ENCODE measurements at regions of chr2 and their contacts with region 1.

Region 1: DNA sequence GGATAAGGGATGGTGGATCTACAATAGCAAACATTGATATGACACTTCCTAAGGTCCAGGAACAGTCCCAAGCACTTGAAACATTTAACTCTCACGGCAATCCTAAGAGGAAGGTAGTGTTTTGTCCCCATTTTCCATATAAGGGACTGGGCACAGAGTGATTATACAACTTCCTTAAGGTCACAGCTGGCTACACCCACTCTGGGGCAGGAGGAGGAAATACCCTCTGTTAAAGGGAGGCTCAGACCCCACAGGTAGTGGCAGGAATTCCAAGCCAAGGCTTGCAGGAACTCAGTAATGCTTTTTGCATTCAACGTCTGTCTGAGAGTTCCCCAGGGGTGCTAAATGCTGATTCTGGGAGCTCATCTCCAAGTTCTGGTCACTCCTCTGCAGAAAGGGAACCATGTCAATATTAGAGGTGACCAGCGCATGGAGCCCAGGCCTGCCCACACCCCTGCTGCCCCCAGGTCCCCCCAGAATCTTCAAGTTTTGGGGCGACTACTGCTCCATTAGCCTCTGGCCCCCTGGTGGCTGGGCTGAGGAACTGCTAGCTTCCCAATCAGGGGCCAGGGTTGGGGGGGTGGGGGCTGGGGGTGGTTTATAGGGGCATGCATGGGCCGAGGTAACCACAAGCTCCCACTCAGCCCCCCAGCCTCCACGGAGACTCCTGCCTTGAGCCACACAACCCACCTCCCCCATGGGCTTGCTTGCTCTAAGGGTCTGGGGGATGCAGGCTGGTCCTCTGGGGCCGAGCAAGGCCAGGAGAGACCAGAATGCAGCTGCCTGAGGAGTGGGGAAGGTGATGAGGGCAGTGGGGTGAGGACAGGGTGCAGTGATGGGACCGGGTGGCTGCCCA is 11.1 kb downstream of the OBSL1 start:
- DNase-seq: no peak
- H3K4me3 ChIP-seq: no peak overlapping the region
- H3K27me3 ChIP-seq: no peaks in the 10 kb centered on the region
- CTCF ChIP-seq: peak; percentile 80

Region 2: GRCh38 chr2:219142329-219142728 is 417.9 kb before region 1 on chr2:
- CTCF ChIA-PET with region 1: no interaction called
- POLR2A ChIA-PET with region 1: no interaction called
- DNase-seq: peak; percentile 76
- H3K4me3 ChIP-seq: no peak overlapping the region
- H3K27me3 ChIP-seq: no peaks in the 10 kb centered on the region
- CTCF ChIP-seq: peak; percentile 59

Region 3: GRCh38 chr2:219530048-219530963 is 30.0 kb before region 1 on chr2:
- CTCF ChIA-PET with region 1: no interaction called
- POLR2A ChIA-PET with region 1: no interaction called
- DNase-seq: no peak
- H3K4me3 ChIP-seq: peak overlapping the region; percentile 11; the same call in 1 of the 2 replicates
- H3K27me3 ChIP-seq: peaks cover 13% of the 10 kb centered on the region
- CTCF ChIP-seq: peak; percentile 96

Region 4: DNA sequence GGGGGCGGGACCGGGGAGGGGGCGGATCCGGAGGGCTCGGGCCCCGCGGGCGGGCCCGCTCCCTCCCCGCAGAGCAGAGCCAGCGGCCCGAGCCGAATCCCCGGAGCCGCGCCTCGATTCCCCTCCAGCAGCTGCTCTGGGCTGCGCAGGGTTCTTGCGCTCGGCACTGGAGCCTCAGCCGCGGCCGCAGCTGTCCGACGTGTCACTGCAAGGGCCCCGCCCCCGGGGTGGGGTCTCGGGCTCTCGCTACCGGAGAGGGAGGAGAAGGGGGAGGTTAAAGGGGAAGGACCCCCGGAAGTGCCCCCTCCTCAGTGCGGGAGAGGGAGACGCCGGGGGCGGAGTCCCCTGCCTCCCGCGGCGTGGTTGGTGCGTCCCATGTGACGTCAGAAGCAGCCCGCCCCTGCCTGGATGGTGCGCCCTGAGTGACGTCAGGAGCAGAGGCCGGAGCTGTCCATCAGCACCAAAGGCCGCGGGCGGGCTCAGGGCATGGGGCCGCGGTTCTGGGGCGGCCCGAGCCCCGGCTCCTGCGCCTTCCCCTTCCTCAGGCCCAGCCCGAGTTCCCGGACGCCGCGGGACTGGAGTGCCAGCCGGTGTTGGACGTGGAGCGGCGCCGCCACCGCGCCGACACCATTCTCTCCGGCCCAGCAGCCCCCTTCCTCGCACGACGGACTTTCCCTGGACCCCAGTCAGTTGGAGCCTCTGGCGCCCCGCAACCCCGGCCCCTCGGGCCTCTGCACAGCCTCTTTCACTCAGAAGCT is 16.5 kb before region 1 on chr2 and contains the starts of genes CHPF and TMEM198:
- CTCF ChIA-PET with region 1: interaction called, 29 read pairs
- POLR2A ChIA-PET with region 1: no interaction called
- DNase-seq: peak; percentile 86
- H3K4me3 ChIP-seq: peak within 1 kb of the TSS; percentile 84
- H3K27me3 ChIP-seq: no peaks in the 10 kb centered on the region
- CTCF ChIP-seq: no peak
- polyA plus RNA-seq, gene CHPF: 65.0 and 119 TPM in 2 replicates
- polyA plus RNA-seq, gene TMEM198: 2.5 and 4.0 TPM in 2 replicates

Region 5: DNA sequence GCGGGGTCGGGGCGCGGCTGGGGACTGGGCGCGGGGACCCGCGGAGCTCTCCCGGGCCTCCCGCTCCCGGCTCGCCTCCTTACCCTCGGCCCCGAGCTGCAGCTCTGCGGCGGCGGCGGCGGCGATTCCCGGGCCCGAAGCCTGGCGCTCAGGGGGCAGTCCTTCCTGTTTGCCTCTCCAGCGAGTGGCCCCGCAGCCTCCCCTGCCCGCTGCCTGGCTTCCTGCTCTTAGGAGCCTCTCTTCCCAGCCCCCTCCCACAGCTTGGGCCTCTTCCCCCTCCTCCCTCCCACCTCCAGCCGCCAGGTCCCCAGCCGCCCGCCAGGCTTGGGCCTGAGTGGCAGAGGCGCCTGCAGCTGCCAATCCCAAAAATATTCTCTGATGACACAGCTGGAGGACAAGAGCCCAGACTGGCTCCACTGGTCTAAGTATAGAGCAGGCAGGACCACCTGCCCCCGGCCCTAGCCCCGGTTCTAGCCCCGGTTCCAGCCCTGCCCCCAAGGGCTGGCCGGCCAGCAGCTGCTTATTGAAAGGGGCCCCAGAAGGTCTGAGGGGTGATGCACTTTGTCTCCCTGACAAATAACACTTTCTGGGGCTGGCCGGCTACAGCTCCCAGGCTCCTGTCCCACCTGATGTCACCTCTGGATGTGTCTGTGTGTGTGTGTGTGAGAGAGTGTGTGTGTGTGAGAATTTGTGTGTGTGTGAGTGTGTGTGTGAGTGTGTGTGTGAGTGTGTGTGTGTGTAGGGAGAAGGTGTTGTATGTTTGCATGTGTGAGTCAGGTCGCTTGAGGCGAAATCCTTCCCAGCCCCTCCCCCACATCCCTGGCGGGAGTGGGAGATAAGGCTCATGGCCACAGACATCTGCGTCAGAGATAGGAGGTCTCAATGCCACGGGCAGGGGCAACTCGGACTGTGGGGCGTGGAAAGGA is 11.3 kb after region 1 on chr2 and contains the start of gene OBSL1:
- CTCF ChIA-PET with region 1: interaction called, 25 read pairs
- POLR2A ChIA-PET with region 1: no interaction called
- DNase-seq: no peak
- H3K4me3 ChIP-seq: peak within 1 kb of the TSS; percentile 76
- H3K27me3 ChIP-seq: peaks cover 5% of the 10 kb centered on the region
- CTCF ChIP-seq: no peak
- polyA plus RNA-seq, gene OBSL1: 47.2 and 75.9 TPM in 2 replicates

Region 6: GRCh38 chr2:219576493-219577388 is 16.5 kb after region 1 on chr2:
- CTCF ChIA-PET with region 1: interaction called, 25 read pairs
- POLR2A ChIA-PET with region 1: no interaction called
- DNase-seq: no peak
- H3K4me3 ChIP-seq: no peak overlapping the region
- H3K27me3 ChIP-seq: peaks cover 10% of the 10 kb centered on the region
- CTCF ChIP-seq: no peak

Region 7: GRCh38 chr2:219597552-219598307 is 37.5 kb after region 1 on chr2 and contains the start of gene STK11IP:
- CTCF ChIA-PET with region 1: interaction called, 20 read pairs
- POLR2A ChIA-PET with region 1: no interaction called
- DNase-seq: peak; percentile 81
- H3K4me3 ChIP-seq: peak within 1 kb of the TSS; percentile 83
- H3K27me3 ChIP-seq: no peaks in the 10 kb centered on the region
- CTCF ChIP-seq: no peak
- polyA plus RNA-seq, gene STK11IP: 11.3 and 21.0 TPM in 2 replicates